CD8-positive, alpha-beta T cell (primary cell): ENCODE measurements at regions of chr12 and their contacts with region 1.

Region 1: GRCh38 chr12:25436203-25437030 is 116.7 kb downstream of the LMNTD1 start:
- DNase-seq: peak in 5 of 9 experiments; percentile 13 to 74 (median 25)
- ATAC-seq: peak; percentile 62
- H3K4me3 ChIP-seq: no peak overlapping the region
- H3K4me3 Mint-ChIP-seq: peak overlapping the region; percentile 33
- H3K27ac ChIP-seq: no peak overlapping the region
- H3K27ac Mint-ChIP-seq: no peak overlapping the region
- H3K4me1 ChIP-seq: no peaks in the 10 kb centered on the region
- H3K4me1 Mint-ChIP-seq: peaks cover 7% of the 10 kb centered on the region
- H3K27me3 ChIP-seq: no peaks in the 10 kb centered on the region
- H3K27me3 Mint-ChIP-seq: no peaks in the 10 kb centered on the region
- CTCF ChIP-seq: peak; percentile 82

Region 2: GRCh38 chr12:24838531-24838950 is 597.9 kb before region 1 on chr12:
- CTCF ChIA-PET with region 1: no interaction called
- POLR2A ChIA-PET with region 1: no interaction called
- intact Hi-C with region 1: no loop called
- DNase-seq: peak in 2 of 9 experiments; percentile 9 to 37
- ATAC-seq: no peak
- H3K4me3 ChIP-seq: no peak overlapping the region
- H3K4me3 Mint-ChIP-seq: no peak overlapping the region
- H3K27ac ChIP-seq: no peak overlapping the region
- H3K27ac Mint-ChIP-seq: no peak overlapping the region
- H3K4me1 ChIP-seq: no peaks in the 10 kb centered on the region
- H3K4me1 Mint-ChIP-seq: peaks cover 10% of the 10 kb centered on the region
- H3K27me3 ChIP-seq: no peaks in the 10 kb centered on the region
- H3K27me3 Mint-ChIP-seq: peaks cover 7% of the 10 kb centered on the region
- CTCF ChIP-seq: no peak

Region 3: DNA sequence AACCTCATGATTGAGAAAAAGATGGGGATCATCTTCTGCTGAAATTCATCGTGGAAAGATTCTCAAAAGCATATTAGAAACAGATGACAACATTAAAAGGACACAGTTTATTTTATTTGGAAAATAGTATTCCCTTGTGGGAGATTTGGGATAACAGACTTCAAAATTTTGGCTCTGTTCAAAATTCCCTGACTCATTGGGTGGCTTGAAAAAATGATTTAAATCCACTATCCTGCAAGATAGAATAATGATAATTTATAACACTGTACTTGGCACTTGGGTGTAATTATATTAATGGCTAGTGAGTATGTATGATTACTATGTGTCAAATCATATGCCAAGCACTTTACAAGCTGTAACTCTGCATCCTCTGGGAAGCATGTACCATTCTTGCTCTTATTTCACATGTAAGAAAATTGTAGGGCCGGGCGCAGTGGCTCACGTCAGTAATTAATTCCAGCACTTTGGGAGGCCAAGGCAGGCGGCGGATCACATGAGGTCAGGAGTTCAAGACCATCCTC is 12.1 kb before region 1 on chr12:
- CTCF ChIA-PET with region 1: interaction called, 10 read pairs
- POLR2A ChIA-PET with region 1: no interaction called
- intact Hi-C with region 1: no loop called
- DNase-seq: no peak
- ATAC-seq: no peak
- H3K4me3 ChIP-seq: no peak overlapping the region
- H3K4me3 Mint-ChIP-seq: no peak overlapping the region
- H3K27ac ChIP-seq: no peak overlapping the region
- H3K27ac Mint-ChIP-seq: no peak overlapping the region
- H3K4me1 ChIP-seq: no peaks in the 10 kb centered on the region
- H3K4me1 Mint-ChIP-seq: no peaks in the 10 kb centered on the region
- H3K27me3 ChIP-seq: no peaks in the 10 kb centered on the region
- H3K27me3 Mint-ChIP-seq: no peaks in the 10 kb centered on the region
- CTCF ChIP-seq: no peak

Region 4: DNA sequence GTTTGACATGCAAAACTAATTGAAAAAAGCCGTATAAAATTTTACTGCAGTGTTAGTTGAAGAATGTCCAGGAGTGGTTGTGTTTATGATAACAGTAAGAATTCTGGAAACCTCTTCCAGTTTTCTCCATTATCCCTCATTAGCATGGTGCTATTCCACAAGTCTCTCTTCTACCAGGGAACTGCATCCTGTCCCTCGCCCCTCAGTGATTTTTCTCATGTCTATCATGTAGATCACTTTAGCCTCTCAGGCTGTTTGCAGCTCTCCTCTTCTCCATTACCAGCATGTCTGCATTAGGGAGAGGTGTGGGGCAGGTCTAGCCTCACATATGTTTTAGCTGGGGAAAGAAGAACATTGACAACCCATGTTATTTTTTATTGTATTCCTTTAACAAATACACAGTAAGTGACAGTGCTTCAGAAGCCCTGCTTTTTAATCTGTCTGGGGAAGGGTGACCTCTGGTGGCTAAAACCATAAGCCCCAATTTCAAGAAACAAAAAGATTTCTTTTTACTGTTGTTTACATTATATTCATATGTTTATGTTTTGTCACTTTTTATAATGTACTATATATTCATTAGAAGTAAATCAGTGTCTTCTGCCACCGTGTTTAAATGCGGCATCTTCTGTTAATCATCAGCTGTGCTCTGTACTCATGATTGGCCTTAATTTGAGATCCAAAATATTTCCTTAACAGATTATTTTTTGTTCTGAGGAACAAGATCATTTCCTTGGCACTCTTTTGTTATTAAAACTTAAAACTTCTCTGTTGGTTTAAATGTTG is 592.7 kb after region 1 on chr12:
- CTCF ChIA-PET with region 1: interaction called, 10 read pairs
- POLR2A ChIA-PET with region 1: no interaction called
- intact Hi-C with region 1: loop called (anchors 1 kb)
- DNase-seq: peak in 4 of 9 experiments; percentile 9 to 50 (median 18)
- ATAC-seq: no peak
- H3K4me3 ChIP-seq: no peak overlapping the region
- H3K4me3 Mint-ChIP-seq: no peak overlapping the region
- H3K27ac ChIP-seq: no peak overlapping the region
- H3K27ac Mint-ChIP-seq: no peak overlapping the region
- H3K4me1 ChIP-seq: no peaks in the 10 kb centered on the region
- H3K4me1 Mint-ChIP-seq: no peaks in the 10 kb centered on the region
- H3K27me3 ChIP-seq: no peaks in the 10 kb centered on the region
- H3K27me3 Mint-ChIP-seq: no peaks in the 10 kb centered on the region
- CTCF ChIP-seq: peak; percentile 54

Region 5: GRCh38 chr12:26034371-26035142 is 598.1 kb after region 1 on chr12:
- CTCF ChIA-PET with region 1: interaction called, 10 read pairs
- POLR2A ChIA-PET with region 1: no interaction called
- intact Hi-C with region 1: loop called (anchors 1 kb)
- DNase-seq: no peak
- ATAC-seq: no peak
- H3K4me3 ChIP-seq: no peak overlapping the region
- H3K4me3 Mint-ChIP-seq: no peak overlapping the region
- H3K27ac ChIP-seq: no peak overlapping the region
- H3K27ac Mint-ChIP-seq: no peak overlapping the region
- H3K4me1 ChIP-seq: no peaks in the 10 kb centered on the region
- H3K4me1 Mint-ChIP-seq: no peaks in the 10 kb centered on the region
- H3K27me3 ChIP-seq: no peaks in the 10 kb centered on the region
- H3K27me3 Mint-ChIP-seq: no peaks in the 10 kb centered on the region
- CTCF ChIP-seq: no peak

Region 6: GRCh38 chr12:26651566-26652188 is 1215.3 kb after region 1 on chr12:
- CTCF ChIA-PET with region 1: no interaction called
- POLR2A ChIA-PET with region 1: no interaction called
- intact Hi-C with region 1: loop called in 1 of 2 experiments (anchors 10 kb)
- DNase-seq: peak in 3 of 9 experiments; percentile 10 to 35 (median 28)
- ATAC-seq: no peak
- H3K4me3 ChIP-seq: no peak overlapping the region
- H3K4me3 Mint-ChIP-seq: no peak overlapping the region
- H3K27ac ChIP-seq: no peak overlapping the region
- H3K27ac Mint-ChIP-seq: no peak overlapping the region
- H3K4me1 ChIP-seq: no peaks in the 10 kb centered on the region
- H3K4me1 Mint-ChIP-seq: no peaks in the 10 kb centered on the region
- H3K27me3 ChIP-seq: no peaks in the 10 kb centered on the region
- H3K27me3 Mint-ChIP-seq: no peaks in the 10 kb centered on the region
- CTCF ChIP-seq: peak; percentile 52

Region 7: GRCh38 chr12:26701604-26702215 is 1265.3 kb after region 1 on chr12:
- CTCF ChIA-PET with region 1: no interaction called
- POLR2A ChIA-PET with region 1: no interaction called
- intact Hi-C with region 1: loop called in 1 of 2 experiments (anchors 5 kb)
- DNase-seq: peak in 2 of 9 experiments; percentile 31 to 44
- ATAC-seq: no peak
- H3K4me3 ChIP-seq: no peak overlapping the region
- H3K4me3 Mint-ChIP-seq: no peak overlapping the region
- H3K27ac ChIP-seq: no peak overlapping the region
- H3K27ac Mint-ChIP-seq: no peak overlapping the region
- H3K4me1 ChIP-seq: no peaks in the 10 kb centered on the region
- H3K4me1 Mint-ChIP-seq: no peaks in the 10 kb centered on the region
- H3K27me3 ChIP-seq: no peaks in the 10 kb centered on the region
- H3K27me3 Mint-ChIP-seq: no peaks in the 10 kb centered on the region
- CTCF ChIP-seq: peak; percentile 32

Region 8: GRCh38 chr12:27305673-27306456 is 1869.4 kb after region 1 on chr12:
- CTCF ChIA-PET with region 1: no interaction called
- POLR2A ChIA-PET with region 1: no interaction called
- intact Hi-C with region 1: loop called in 1 of 2 experiments (anchors 10 kb)
- DNase-seq: peak in 2 of 9 experiments; percentile 46 to 62
- ATAC-seq: peak; percentile 34
- H3K4me3 ChIP-seq: no peak overlapping the region
- H3K4me3 Mint-ChIP-seq: no peak overlapping the region
- H3K27ac ChIP-seq: no peak overlapping the region
- H3K27ac Mint-ChIP-seq: no peak overlapping the region
- H3K4me1 ChIP-seq: no peaks in the 10 kb centered on the region
- H3K4me1 Mint-ChIP-seq: no peaks in the 10 kb centered on the region
- H3K27me3 ChIP-seq: no peaks in the 10 kb centered on the region
- H3K27me3 Mint-ChIP-seq: no peaks in the 10 kb centered on the region
- CTCF ChIP-seq: peak; percentile 89